ENCODE measurements at regions of chr13 and their contacts with region 1.

Region 1: GRCh38 chr13:46831588-46832194 is 34.7 kb upstream of the ESD start:
- DNase-seq: peak; percentile 71
- ATAC-seq: peak; percentile 54; the same call in 1 of the 2 replicates
- H3K4me3 ChIP-seq: no peak overlapping the region
- H3K27ac ChIP-seq: no peak overlapping the region
- H3K4me1 ChIP-seq: no peaks in the 10 kb centered on the region
- H3K27me3 ChIP-seq: no peaks in the 10 kb centered on the region
- CTCF ChIP-seq: peak; percentile 87

Region 2: DNA sequence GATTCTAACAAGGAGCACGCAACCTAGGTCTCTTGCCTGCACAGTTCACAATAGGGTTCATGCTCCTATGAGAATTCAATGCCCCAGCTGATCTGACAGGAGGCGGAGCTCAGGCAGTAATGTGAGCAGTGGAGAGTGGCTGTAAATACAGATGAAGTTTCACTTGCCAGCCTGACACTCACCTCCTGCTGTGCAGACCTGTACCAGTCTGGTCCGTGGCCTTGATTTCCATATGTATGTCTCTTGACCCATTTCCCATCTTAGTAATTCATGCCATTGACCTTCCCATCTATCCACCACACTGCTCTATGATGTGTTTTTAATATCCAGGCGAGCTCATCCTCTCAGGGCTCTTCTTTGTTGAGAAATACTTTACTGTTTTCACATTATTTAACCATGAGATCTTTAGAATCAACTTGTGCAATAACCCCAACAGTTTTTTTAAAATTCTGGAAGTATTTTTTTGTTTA is 183.5 kb before region 1 on chr13:
- CTCF ChIA-PET with region 1: no interaction called
- POLR2A ChIA-PET with region 1: no interaction called
- intact Hi-C with region 1: no loop called
- DNase-seq: peak; percentile 13
- ATAC-seq: peak; percentile 65; the same call in 1 of the 2 replicates
- H3K4me3 ChIP-seq: no peak overlapping the region
- H3K27ac ChIP-seq: no peak overlapping the region
- H3K4me1 ChIP-seq: no peaks in the 10 kb centered on the region
- H3K27me3 ChIP-seq: no peaks in the 10 kb centered on the region
- CTCF ChIP-seq: no peak

Region 3: GRCh38 chr13:46934749-46935148 is 103.1 kb after region 1 on chr13:
- CTCF ChIA-PET with region 1: no interaction called
- POLR2A ChIA-PET with region 1: no interaction called
- intact Hi-C with region 1: no loop called
- DNase-seq: no peak
- ATAC-seq: no peak
- H3K4me3 ChIP-seq: no peak overlapping the region
- H3K27ac ChIP-seq: no peak overlapping the region
- H3K4me1 ChIP-seq: no peaks in the 10 kb centered on the region; the same call in 1 of the 2 replicates
- H3K27me3 ChIP-seq: no peaks in the 10 kb centered on the region
- CTCF ChIP-seq: no peak

Region 4: DNA sequence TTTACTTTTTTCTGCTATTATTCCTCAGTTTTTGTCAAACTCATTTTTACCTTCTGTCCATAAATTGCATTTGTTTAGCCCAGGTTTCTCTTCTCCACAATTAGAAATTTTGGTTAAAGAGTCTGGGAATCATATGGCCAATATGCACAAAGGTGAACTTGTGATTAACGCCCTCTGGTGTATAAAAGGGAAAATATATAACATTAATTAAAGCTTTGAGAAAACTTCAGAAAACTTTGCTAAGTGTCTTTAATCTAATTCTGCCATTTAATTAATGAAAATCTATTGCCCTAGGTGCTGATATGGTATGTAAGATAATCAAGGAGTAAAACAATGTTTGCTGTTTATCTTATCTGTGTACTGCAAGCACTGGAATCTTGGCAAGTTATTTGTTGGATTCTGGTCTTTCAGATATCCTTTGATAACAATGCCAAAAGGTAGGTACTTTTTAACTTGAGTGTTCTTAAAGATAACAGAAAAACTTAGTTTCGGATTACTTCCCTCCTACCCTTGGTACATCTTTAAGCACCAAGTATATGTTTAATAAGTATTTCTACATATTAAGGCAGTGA is 766.7 kb after region 1 on chr13:
- CTCF ChIA-PET with region 1: interaction called, 3 read pairs
- POLR2A ChIA-PET with region 1: no interaction called
- intact Hi-C with region 1: loop called (anchors 5 kb)
- DNase-seq: peak; percentile 26
- ATAC-seq: no peak
- H3K4me3 ChIP-seq: no peak overlapping the region
- H3K27ac ChIP-seq: no peak overlapping the region
- H3K4me1 ChIP-seq: no peaks in the 10 kb centered on the region
- H3K27me3 ChIP-seq: no peaks in the 10 kb centered on the region
- CTCF ChIP-seq: peak; percentile 59

Measured in PC-3 (cell line).